ENCODE measurements at regions of chr5 and their contacts with region 1.

Region 1: DNA sequence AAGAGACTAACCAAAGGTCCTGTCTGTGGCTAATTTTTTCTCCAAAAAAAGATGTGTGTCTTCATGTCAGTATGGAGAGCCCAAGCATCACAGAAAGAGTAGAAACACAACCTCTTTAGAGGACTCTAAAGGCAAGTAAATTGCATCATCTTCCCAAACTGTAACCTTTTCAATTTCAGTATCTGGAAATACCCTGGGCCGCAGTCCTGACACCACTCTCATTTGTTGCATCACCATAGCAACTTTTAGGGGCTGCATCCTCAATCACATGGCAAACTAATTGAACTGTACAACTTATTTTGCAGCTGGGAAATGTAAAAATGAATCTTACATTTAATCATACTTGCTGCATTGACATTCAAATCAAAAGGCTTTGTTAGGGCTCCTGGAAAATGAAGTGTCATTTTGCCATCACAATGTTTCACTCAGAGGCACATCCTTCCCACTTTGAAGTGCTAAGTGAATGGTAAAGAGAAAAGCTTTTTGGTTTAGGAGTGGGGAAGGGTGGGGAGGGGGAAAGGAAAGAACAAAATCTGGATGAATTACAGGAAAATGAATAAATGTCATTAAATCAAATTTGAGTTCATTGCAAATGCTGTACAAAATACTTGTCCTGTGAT is 60.6 kb upstream of the GRIA1 start:
- DNase-seq: no peak
- H3K4me3 ChIP-seq: no peak overlapping the region
- H3K27ac ChIP-seq: no peak overlapping the region
- H3K4me1 ChIP-seq: no peaks in the 10 kb centered on the region
- H3K27me3 ChIP-seq: no peaks in the 10 kb centered on the region
- CTCF ChIP-seq: no peak
- POLR2A ChIP-seq: no peak

Region 2: GRCh38 chr5:151896031-151896691 is 1533.7 kb before region 1 on chr5:
- intact Hi-C with region 1: loop called (anchors 10 kb)
- DNase-seq: no peak
- H3K4me3 ChIP-seq: no peak overlapping the region
- H3K27ac ChIP-seq: no peak overlapping the region
- H3K4me1 ChIP-seq: no peaks in the 10 kb centered on the region
- H3K27me3 ChIP-seq: no peaks in the 10 kb centered on the region
- CTCF ChIP-seq: no peak
- POLR2A ChIP-seq: no peak